ENCODE measurements at regions of chr1 and their contacts with region 1.

Region 1: DNA sequence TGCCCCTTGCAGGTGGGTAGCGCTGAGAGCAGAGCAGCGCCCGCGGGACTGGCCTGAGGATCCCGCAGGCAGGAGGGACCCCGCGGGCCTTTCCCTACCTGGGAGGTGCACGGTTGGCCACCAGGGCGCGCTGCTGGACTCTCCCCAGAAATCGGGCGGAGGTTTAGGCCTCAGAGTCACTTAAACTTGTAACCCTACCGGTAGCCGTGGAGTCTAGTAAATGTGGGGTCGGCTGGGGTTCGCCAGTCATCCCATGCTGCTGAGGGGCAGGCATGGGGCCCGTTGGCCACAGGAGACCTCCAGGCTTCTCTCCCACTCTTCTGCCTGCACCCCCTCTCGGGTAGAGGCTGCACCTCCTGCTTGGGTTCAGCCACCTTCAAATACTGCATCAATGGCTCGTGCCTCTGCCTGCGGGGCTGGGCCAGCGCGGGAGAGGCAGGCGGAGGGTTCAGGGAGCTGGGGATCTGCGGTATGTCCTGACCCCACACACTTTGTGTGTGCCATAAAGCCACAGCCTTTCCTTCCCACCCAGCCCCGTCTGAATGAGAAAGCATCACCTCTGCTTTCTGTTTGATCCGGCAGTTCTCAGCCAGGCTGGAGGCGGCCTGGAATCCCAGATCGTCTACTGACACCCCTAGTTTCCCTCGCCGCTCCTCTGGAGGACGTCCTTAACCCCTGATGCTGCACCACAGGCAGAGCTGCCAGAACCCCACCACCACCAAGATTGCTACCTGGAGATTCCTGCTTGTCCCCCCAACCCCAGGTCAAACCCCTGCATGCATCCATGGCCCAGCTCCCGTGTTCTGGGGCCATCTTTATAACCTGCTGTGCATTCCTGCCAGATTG is 12.3 kb upstream of the GSTM4 start:
- DNase-seq: peak; percentile 63
- H3K4me3 ChIP-seq: no peak overlapping the region
- H3K27ac ChIP-seq: no peak overlapping the region
- H3K4me1 ChIP-seq: no peaks in the 10 kb centered on the region
- H3K27me3 ChIP-seq: no peaks in the 10 kb centered on the region
- CTCF ChIP-seq: peak; percentile 86 to 97
- POLR2A ChIP-seq: no peak

Region 2: GRCh38 chr1:109027841-109028240 is 615.8 kb before region 1 on chr1:
- CTCF ChIA-PET with region 1: no interaction called
- POLR2A ChIA-PET with region 1: no interaction called
- dilution Hi-C with region 1: no loop called
- intact Hi-C with region 1: no loop called
- DNase-seq: no peak
- H3K4me3 ChIP-seq: no peak overlapping the region
- H3K27ac ChIP-seq: no peak overlapping the region
- H3K4me1 ChIP-seq: no peaks in the 10 kb centered on the region
- H3K27me3 ChIP-seq: no peaks in the 10 kb centered on the region
- CTCF ChIP-seq: no peak
- POLR2A ChIP-seq: no peak

Region 3: DNA sequence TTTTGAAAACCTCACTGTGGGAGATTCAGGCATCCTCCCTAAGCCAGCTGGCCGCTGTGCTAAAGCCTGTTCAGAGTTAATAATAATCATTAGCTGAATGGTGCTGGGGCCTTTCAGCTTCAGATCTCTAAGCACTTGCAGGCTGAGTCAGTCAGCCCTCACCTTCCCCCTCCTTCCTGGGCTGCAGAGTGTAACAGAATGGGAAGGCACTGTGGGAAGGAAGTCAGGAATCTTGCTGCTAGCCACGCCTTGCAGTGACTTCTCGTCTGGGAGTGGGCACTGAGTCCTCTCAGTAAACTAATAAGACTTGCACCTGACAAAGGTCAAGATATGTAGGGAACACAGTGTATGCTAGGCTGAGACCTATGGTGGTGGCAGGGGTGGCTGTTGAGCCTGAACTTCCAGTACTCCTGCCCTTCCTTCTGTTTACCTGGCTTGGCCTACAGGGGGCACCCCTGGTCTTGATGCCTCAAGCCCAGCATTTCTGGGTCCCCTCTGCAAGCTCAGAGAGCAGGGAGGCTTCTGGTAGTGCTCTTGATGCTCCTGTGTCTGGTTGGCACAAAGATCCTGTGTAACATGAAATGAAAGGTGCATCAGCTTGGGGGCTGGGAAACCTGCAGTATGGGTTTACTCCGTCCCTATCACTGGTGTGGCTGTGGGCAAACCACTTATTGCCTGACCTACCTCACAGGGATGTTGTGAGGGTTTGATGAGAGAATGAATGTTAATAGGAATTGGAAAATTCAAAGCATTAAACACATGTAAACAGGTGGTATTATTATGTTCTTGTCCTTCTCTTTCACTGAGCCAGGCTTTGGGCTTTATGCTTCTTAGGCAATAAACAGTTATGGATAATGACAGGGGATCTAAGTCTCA is 143.7 kb before region 1 on chr1:
- CTCF ChIA-PET with region 1: interaction called, 8 read pairs
- POLR2A ChIA-PET with region 1: no interaction called
- dilution Hi-C with region 1: no loop called
- intact Hi-C with region 1: loop called (anchors 5 kb)
- DNase-seq: peak; percentile 28
- H3K4me3 ChIP-seq: no peak overlapping the region
- H3K27ac ChIP-seq: no peak overlapping the region
- H3K4me1 ChIP-seq: peaks cover 7% of the 10 kb centered on the region
- H3K27me3 ChIP-seq: no peaks in the 10 kb centered on the region
- CTCF ChIP-seq: peak; percentile 51 to 60
- POLR2A ChIP-seq: no peak

Region 4: GRCh38 chr1:109523706-109524105 is 119.9 kb before region 1 on chr1:
- CTCF ChIA-PET with region 1: no interaction called
- POLR2A ChIA-PET with region 1: no interaction called
- dilution Hi-C with region 1: no loop called
- intact Hi-C with region 1: no loop called
- DNase-seq: no peak
- H3K4me3 ChIP-seq: no peak overlapping the region
- H3K27ac ChIP-seq: no peak overlapping the region
- H3K4me1 ChIP-seq: no peaks in the 10 kb centered on the region
- H3K27me3 ChIP-seq: peaks cover 18 to 28% of the 10 kb centered on the region in 2 experiments
- CTCF ChIP-seq: no peak
- POLR2A ChIP-seq: no peak

Region 5: GRCh38 chr1:109559995-109560394 is 83.6 kb before region 1 on chr1:
- CTCF ChIA-PET with region 1: interaction called, 14 read pairs
- POLR2A ChIA-PET with region 1: no interaction called
- dilution Hi-C with region 1: no loop called
- intact Hi-C with region 1: no loop called
- DNase-seq: no peak
- H3K4me3 ChIP-seq: no peak overlapping the region
- H3K27ac ChIP-seq: no peak overlapping the region
- H3K4me1 ChIP-seq: no peaks in the 10 kb centered on the region
- H3K27me3 ChIP-seq: no peaks in the 10 kb centered on the region
- CTCF ChIP-seq: no peak
- POLR2A ChIP-seq: no peak

Region 6: GRCh38 chr1:109620841-109621286 is 22.7 kb before region 1 on chr1:
- CTCF ChIA-PET with region 1: interaction called, 22 read pairs
- POLR2A ChIA-PET with region 1: no interaction called
- dilution Hi-C with region 1: no loop called
- intact Hi-C with region 1: no loop called
- DNase-seq: peak; percentile 95
- H3K4me3 ChIP-seq: peak overlapping the region; percentile 74 to 83 (median 76)
- H3K27ac ChIP-seq: peak overlapping the region; percentile 97
- H3K4me1 ChIP-seq: peaks cover 49% of the 10 kb centered on the region
- H3K27me3 ChIP-seq: no peaks in the 10 kb centered on the region
- CTCF ChIP-seq: no peak
- POLR2A ChIP-seq: no peak

Region 7: DNA sequence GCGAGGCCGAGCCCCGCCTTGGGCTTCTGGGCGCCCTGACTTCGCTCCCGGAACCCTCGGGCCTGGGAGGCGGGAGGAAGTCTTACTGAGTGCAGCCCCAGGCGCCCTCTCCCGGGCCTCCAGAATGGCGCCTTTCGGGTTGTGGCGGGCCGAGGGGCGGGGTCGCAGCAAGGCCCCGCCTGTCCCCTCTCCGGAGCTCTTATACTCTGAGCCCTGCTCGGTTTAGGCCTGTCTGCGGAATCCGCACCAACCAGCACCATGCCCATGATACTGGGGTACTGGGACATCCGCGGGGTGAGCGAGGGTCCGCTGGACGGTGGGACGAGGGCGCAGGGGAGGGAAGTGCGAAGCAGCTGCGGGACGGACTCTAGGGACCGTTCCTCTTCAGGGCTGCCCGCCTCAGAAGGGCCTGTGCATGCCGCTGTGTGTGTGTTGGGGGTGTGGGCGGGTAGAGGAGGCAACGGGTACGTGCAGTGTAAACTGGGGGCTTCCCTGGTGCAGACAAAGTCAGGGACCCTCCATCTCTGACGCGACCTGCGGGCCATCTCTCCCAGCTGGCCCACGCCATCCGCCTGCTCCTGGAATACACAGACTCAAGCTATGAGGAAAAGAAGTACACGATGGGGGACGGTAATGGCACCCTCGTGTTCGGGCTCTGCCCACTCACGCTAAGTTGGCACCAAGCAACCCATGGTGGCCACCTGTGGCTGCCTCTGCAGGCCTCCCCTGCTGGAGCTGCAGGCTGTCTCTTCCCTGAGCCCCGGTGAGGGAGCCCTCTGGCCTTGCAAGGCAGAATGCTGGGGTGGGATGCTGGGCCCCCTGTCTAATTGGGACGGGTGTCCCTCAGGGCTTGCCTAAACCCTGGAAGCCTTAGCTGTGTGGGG is 44.2 kb after region 1 on chr1 and contains the start of gene GSTM1:
- CTCF ChIA-PET with region 1: interaction called, 45 read pairs
- POLR2A ChIA-PET with region 1: no interaction called
- dilution Hi-C with region 1: no loop called
- intact Hi-C with region 1: no loop called
- DNase-seq: no peak
- H3K4me3 ChIP-seq: no peak within 1 kb of the TSS
- H3K27ac ChIP-seq: no peak within 1 kb of the TSS
- H3K4me1 ChIP-seq: no peaks in the 10 kb centered on the region
- H3K27me3 ChIP-seq: no peaks in the 10 kb centered on the region
- CTCF ChIP-seq: no peak
- POLR2A ChIP-seq: no peak
- total RNA-seq, gene GSTM1: 35.5 TPM in 1 of 2 replicates, not detected in the other

Region 8: DNA sequence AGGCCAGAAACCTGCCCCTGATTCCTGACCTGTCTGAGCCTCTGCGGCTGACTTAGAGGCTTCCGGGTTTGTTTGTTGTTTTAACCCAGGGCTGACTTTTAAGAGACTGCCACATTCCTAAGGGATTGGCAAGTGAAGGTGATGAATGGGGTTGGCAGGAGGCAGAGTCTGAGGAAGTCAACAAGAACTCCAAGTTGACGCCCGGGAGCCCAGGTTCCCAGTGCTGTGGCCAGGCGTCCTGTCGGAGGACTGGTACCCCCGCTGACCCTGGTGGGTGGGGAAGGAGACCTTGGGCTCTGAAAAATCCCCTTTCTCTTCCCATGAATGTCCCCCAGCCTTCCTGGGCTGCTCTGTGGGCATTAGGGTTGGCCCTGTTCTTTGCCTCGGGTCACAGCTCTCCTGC is 139.8 kb after region 1 on chr1:
- CTCF ChIA-PET with region 1: interaction called, 18 read pairs
- POLR2A ChIA-PET with region 1: no interaction called
- dilution Hi-C with region 1: no loop called
- intact Hi-C with region 1: no loop called
- DNase-seq: peak; percentile 59
- H3K4me3 ChIP-seq: no peak overlapping the region
- H3K27ac ChIP-seq: peak overlapping the region; percentile 73
- H3K4me1 ChIP-seq: peaks cover 13% of the 10 kb centered on the region
- H3K27me3 ChIP-seq: no peaks in the 10 kb centered on the region
- CTCF ChIP-seq: no peak
- POLR2A ChIP-seq: no peak

Region 9: DNA sequence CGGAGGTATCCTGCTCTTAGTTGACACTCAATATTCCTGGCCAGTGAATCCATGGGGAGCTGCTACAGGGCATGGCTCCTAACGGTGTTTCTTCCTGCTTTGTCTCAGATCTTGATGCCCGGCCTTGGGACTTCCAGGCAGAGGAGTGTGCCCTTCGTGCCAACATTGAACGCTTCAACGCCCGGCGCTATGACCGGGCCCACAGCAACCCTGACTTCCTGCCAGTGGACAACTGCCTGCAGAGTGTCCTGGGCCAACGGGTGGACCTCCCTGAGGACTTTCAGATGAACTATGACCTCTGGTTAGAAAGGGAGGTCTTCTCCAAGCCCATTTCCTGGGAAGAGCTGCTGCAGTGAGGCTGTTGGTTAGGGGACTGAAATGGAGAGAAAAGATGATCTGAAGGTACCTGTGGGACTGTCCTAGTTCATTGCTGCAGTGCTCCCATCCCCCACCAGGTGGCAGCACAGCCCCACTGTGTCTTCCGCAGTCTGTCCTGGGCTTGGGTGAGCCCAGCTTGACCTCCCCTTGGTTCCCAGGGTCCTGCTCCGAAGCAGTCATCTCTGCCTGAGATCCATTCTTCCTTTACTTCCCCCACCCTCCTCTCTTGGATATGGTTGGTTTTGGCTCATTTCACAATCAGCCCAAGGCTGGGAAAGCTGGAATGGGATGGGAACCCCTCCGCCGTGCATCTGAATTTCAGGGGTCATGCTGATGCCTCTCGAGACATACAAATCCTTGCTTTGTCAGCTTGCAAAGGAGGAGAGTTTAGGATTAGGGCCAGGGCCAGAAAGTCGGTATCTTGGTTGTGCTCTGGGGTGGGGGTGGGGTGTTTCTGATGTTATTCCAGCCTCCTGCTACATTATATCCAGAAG is 410.2 kb after region 1 on chr1:
- CTCF ChIA-PET with region 1: no interaction called
- POLR2A ChIA-PET with region 1: no interaction called
- dilution Hi-C with region 1: no loop called
- intact Hi-C with region 1: no loop called
- DNase-seq: peak; percentile 39
- H3K4me3 ChIP-seq: no peak overlapping the region
- H3K27ac ChIP-seq: no peak overlapping the region
- H3K4me1 ChIP-seq: no peaks in the 10 kb centered on the region
- H3K27me3 ChIP-seq: no peaks in the 10 kb centered on the region
- CTCF ChIP-seq: peak; percentile 83 to 97
- POLR2A ChIP-seq: no peak